ENCODE measurements at regions of chr5 and their contacts with region 1.

Region 1: GRCh38 chr5:113606298-113607134 is 93.0 kb downstream of the YTHDC2 start:
- DNase-seq: peak in 28 of 35 experiments; percentile 2 to 73 (median 19)
- ATAC-seq: peak in 3 of 4 experiments; percentile 76 to 85 (median 78)
- H3K4me3 ChIP-seq: no peak overlapping the region
- H3K4me3 Mint-ChIP-seq: no peak overlapping the region
- H3K27ac ChIP-seq: no peak overlapping the region
- H3K27ac Mint-ChIP-seq: peak overlapping the region in 1 of 2 donors; percentile 6
- H3K4me1 ChIP-seq: peaks cover 0 to 3% of the 10 kb centered on the region in 2 experiments
- H3K4me1 Mint-ChIP-seq: peaks cover 3 to 8% (median 3%) of the 10 kb centered on the region in 3 donors
- H3K27me3 ChIP-seq: peaks cover 0 to 7% of the 10 kb centered on the region in 2 experiments
- H3K27me3 Mint-ChIP-seq: peaks cover 10 to 23% of the 10 kb centered on the region in 2 donors

Region 2: DNA sequence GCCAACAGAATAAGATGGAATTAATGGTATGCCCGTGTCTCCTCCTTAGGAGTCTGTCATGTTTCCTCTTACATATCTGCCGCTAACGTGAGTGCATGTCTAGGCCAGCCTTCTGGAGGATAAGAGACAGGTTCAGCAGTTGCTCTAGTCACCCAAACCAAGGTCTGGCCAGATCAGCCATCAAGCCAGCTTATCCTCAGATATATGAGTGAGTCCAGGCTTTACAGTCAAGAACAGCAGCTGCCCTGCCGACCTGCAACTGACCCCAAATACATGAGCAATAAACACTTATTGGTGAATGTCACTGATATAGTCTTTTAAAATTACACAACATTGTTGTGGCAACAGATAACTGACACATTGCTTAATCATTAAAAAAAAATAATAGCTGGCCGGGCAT is 295.2 kb before region 1 on chr5:
- CTCF ChIA-PET with region 1: interaction called in 1 of 2 experiments, 11 read pairs
- POLR2A ChIA-PET with region 1: no interaction called
- DNase-seq: no peak
- ATAC-seq: no peak
- H3K4me3 ChIP-seq: no peak overlapping the region
- H3K4me3 Mint-ChIP-seq: no peak overlapping the region
- H3K27ac ChIP-seq: no peak overlapping the region
- H3K27ac Mint-ChIP-seq: no peak overlapping the region
- H3K4me1 ChIP-seq: no peaks in the 10 kb centered on the region
- H3K4me1 Mint-ChIP-seq: no peaks in the 10 kb centered on the region
- H3K27me3 ChIP-seq: peaks cover 0 to 7% of the 10 kb centered on the region in 2 experiments
- H3K27me3 Mint-ChIP-seq: peaks cover 0 to 22% of the 10 kb centered on the region in 2 donors

Region 3: GRCh38 chr5:113330533-113331208 is 275.8 kb before region 1 on chr5:
- CTCF ChIA-PET with region 1: interaction called, 4 to 15 read pairs
- POLR2A ChIA-PET with region 1: no interaction called
- DNase-seq: peak in 10 of 35 experiments; percentile 4 to 77 (median 16)
- ATAC-seq: peak; percentile 78 to 88 (median 87)
- H3K4me3 ChIP-seq: no peak overlapping the region
- H3K4me3 Mint-ChIP-seq: no peak overlapping the region
- H3K27ac ChIP-seq: no peak overlapping the region
- H3K27ac Mint-ChIP-seq: peak overlapping the region in 1 of 2 donors; percentile 19
- H3K4me1 ChIP-seq: peaks cover 4% of the 10 kb centered on the region in 2 experiments
- H3K4me1 Mint-ChIP-seq: peaks cover 16 to 19% (median 18%) of the 10 kb centered on the region in 3 donors
- H3K27me3 ChIP-seq: no peaks in the 10 kb centered on the region
- H3K27me3 Mint-ChIP-seq: no peaks in the 10 kb centered on the region

Region 4: GRCh38 chr5:113397046-113397445 is 209.5 kb before region 1 on chr5:
- CTCF ChIA-PET with region 1: interaction called in 1 of 2 experiments, 12 read pairs
- POLR2A ChIA-PET with region 1: no interaction called
- DNase-seq: no peak
- ATAC-seq: no peak
- H3K4me3 ChIP-seq: no peak overlapping the region
- H3K4me3 Mint-ChIP-seq: no peak overlapping the region
- H3K27ac ChIP-seq: no peak overlapping the region
- H3K27ac Mint-ChIP-seq: no peak overlapping the region
- H3K4me1 ChIP-seq: no peaks in the 10 kb centered on the region
- H3K4me1 Mint-ChIP-seq: no peaks in the 10 kb centered on the region
- H3K27me3 ChIP-seq: peaks cover 3 to 7% of the 10 kb centered on the region in 2 experiments
- H3K27me3 Mint-ChIP-seq: peaks cover 5 to 8% of the 10 kb centered on the region in 2 donors

Region 5: DNA sequence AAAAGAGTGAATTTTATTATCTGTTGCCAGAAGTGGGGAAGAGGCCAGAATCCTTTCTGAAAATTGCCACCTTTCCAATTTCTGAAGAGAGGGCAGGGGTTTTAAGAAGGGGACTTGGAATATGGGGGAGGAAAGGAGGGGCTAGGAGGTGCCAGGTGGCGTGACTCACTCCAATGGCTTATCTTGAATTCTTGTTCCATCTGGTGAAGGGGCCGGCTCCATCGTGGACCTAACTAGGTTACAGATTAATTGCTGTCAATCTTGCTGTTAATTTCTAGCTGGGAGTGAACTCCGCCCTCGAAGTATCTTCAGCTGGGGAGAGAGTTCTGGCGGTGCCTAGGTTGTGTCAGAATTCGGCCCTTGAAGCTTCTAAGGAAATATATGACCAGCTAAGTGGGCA is 45.6 kb after region 1 on chr5:
- CTCF ChIA-PET with region 1: no interaction called
- POLR2A ChIA-PET with region 1: no interaction called
- DNase-seq: no peak
- ATAC-seq: no peak
- H3K4me3 ChIP-seq: no peak overlapping the region
- H3K4me3 Mint-ChIP-seq: no peak overlapping the region
- H3K27ac ChIP-seq: no peak overlapping the region
- H3K27ac Mint-ChIP-seq: no peak overlapping the region
- H3K4me1 ChIP-seq: no peaks in the 10 kb centered on the region
- H3K4me1 Mint-ChIP-seq: no peaks in the 10 kb centered on the region
- H3K27me3 ChIP-seq: no peaks in the 10 kb centered on the region
- H3K27me3 Mint-ChIP-seq: peaks cover 9 to 16% of the 10 kb centered on the region in 2 donors